ENCODE measurements at regions of chr10 and their contacts with region 1.

Region 1: GRCh38 chr10:61835069-61835945 is 66.2 kb upstream of the ARID5B start:
- DNase-seq: peak; percentile 16
- H3K4me3 ChIP-seq: no peak overlapping the region
- H3K27ac ChIP-seq: peak overlapping the region; percentile 60 to 76 (median 73)
- H3K4me1 ChIP-seq: peaks cover 14 to 45% (median 36%) of the 10 kb centered on the region in 4 donors
- H3K27me3 ChIP-seq: no peaks in the 10 kb centered on the region
- CTCF ChIP-seq: peak; percentile 27 to 67 (median 42)
- EP300 ChIP-seq: no peak
- POLR2A ChIP-seq: no peak

Region 2: GRCh38 chr10:61765176-61766087 is 69.9 kb before region 1 on chr10:
- in situ Hi-C with region 1: no loop called
- intact Hi-C with region 1: no loop called
- DNase-seq: no peak
- H3K4me3 ChIP-seq: no peak overlapping the region
- H3K27ac ChIP-seq: no peak overlapping the region
- H3K4me1 ChIP-seq: peaks cover 7 to 25% (median 15%) of the 10 kb centered on the region in 4 donors
- H3K27me3 ChIP-seq: no peaks in the 10 kb centered on the region
- CTCF ChIP-seq: no peak
- EP300 ChIP-seq: no peak
- POLR2A ChIP-seq: no peak

Region 3: GRCh38 chr10:61789031-61789430 is 46.3 kb before region 1 on chr10:
- in situ Hi-C with region 1: no loop called
- intact Hi-C with region 1: loop called (anchors 2 kb)
- DNase-seq: no peak
- H3K4me3 ChIP-seq: no peak overlapping the region
- H3K27ac ChIP-seq: no peak overlapping the region
- H3K4me1 ChIP-seq: peaks cover 0 to 25% (median 3%) of the 10 kb centered on the region in 4 donors
- H3K27me3 ChIP-seq: no peaks in the 10 kb centered on the region
- CTCF ChIP-seq: no peak
- EP300 ChIP-seq: no peak
- POLR2A ChIP-seq: no peak

Region 4: GRCh38 chr10:62082729-62083411 is 247.6 kb after region 1 on chr10:
- in situ Hi-C with region 1: no loop called
- intact Hi-C with region 1: no loop called
- DNase-seq: peak; percentile 37
- H3K4me3 ChIP-seq: peak overlapping the region in 1 of 4 donors; percentile 22
- H3K27ac ChIP-seq: peak overlapping the region; percentile 84 to 88 (median 86)
- H3K4me1 ChIP-seq: peaks cover 23 to 57% (median 43%) of the 10 kb centered on the region in 4 donors
- H3K27me3 ChIP-seq: no peaks in the 10 kb centered on the region
- CTCF ChIP-seq: no peak
- EP300 ChIP-seq: no peak
- POLR2A ChIP-seq: no peak

Region 5: GRCh38 chr10:62582804-62583208 is 747.5 kb after region 1 on chr10:
- in situ Hi-C with region 1: no loop called
- intact Hi-C with region 1: no loop called
- DNase-seq: peak; percentile 42
- H3K4me3 ChIP-seq: no peak overlapping the region
- H3K27ac ChIP-seq: peak overlapping the region; percentile 23 to 59 (median 34)
- H3K4me1 ChIP-seq: peaks cover 0 to 5% (median 0%) of the 10 kb centered on the region in 4 donors
- H3K27me3 ChIP-seq: no peaks in the 10 kb centered on the region
- CTCF ChIP-seq: no peak
- EP300 ChIP-seq: no peak
- POLR2A ChIP-seq: no peak

Measured in transverse colon (tissue), 4 donors.